Aorta (tissue), 5 donors: ENCODE measurements at regions of chr17 and their contacts with region 1.

Region 1: GRCh38 chr17:9177212-9177611 is 155.9 kb downstream of the NTN1 start:
- DNase-seq: peak in 1 of 2 donors; percentile 57
- ATAC-seq: peak; percentile 59
- H3K4me3 ChIP-seq: no peak overlapping the region
- H3K27ac ChIP-seq: no peak overlapping the region
- H3K4me1 ChIP-seq: no peaks in the 10 kb centered on the region
- H3K27me3 ChIP-seq: no peaks in the 10 kb centered on the region

Region 2: DNA sequence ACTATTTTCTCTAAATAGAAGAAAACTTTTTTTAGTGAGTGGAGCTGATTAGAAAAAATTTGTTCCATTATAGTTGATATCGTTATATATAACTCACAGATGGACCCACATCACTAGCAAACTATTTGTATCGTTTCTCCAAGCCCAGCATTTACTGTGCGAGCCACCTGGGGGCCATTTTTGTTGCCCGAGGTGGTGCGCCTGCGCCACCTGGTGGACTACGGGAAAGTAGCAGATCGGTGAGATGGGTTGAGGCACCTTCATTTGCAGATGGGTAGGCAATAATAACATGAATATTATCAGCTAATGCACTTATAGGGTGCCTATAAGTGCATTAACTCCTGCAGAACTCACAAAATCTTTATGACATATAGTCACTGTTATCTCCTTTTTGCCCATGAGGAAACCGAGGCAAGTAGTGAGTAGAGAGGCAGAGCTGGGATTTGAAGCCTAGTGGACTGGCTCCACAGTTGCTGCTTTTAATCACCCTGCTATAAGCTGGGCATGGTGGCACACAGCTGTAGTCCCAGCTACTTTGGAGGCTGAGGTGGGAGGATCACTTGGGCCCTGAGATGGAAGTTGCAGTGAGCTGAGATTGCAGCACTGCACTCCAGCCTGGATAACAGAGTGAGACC is 179.1 kb before region 1 on chr17:
- intact Hi-C with region 1: loop called in 1 of 2 experiments (anchors 5 kb)
- DNase-seq: peak; percentile 74 to 85
- ATAC-seq: no peak
- H3K4me3 ChIP-seq: no peak overlapping the region
- H3K27ac ChIP-seq: no peak overlapping the region
- H3K4me1 ChIP-seq: no peaks in the 10 kb centered on the region
- H3K27me3 ChIP-seq: no peaks in the 10 kb centered on the region

Region 3: DNA sequence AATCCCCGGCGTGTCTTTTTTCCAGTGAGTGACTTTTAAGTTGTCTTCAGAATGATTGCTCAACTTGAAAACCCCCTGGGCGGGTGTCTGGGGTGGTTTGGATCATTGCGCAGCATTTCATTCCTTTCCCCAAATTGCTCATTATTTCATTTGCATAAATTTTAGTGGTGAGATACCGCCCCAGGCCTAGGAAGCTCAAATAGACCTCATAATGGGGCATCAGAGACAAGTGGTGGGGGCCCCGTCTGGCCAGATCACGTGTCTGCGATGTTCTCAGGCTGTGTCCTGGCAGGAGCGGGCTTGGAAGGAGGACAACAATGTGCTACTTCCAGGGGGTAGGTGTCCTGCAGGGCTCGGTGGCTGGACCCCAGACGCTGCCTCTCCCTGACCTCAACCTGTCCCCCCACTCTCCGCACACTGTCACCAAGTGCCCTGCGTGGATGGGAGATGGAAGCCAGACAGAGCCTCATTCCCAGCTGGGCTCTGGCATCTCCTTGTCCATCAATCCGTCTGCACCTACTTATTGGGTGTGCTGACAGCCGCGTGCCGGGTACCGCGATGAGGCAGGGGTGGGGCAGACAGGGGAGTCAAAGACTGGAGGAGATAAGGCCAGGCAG is 39.0 kb before region 1 on chr17:
- intact Hi-C with region 1: no loop called
- DNase-seq: no peak
- ATAC-seq: no peak
- H3K4me3 ChIP-seq: no peak overlapping the region
- H3K27ac ChIP-seq: no peak overlapping the region
- H3K4me1 ChIP-seq: no peaks in the 10 kb centered on the region
- H3K27me3 ChIP-seq: no peaks in the 10 kb centered on the region

Region 4: DNA sequence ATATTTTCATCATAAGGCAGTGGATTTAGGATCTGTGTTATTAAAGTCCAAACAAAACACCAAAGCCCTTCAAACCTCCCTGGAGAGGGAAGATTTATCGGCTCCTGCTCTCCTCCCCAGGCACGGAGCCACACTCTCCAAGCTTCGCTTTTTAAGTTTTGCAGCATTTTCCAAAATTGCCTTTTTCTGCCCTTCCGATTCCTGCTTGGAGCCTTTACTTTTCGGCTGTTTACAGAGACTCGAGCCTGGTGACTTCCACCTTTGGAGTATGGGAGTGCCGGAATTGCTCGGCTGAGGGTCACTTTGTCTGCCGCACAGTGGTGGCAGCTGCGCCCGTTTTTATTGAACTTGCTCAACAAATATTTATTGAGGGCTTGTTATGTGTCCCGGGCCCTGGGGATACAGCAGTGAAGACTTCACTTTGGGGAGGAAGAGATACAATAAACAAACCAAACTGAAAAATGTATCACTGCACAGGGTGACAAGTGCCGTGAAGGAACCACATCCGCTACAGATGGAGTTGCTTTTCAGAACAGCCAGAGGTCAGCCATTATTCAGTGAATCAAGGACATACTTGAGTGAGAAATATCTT is 29.6 kb after region 1 on chr17:
- intact Hi-C with region 1: no loop called
- DNase-seq: peak in 1 of 2 donors; percentile 35
- ATAC-seq: peak; percentile 65
- H3K4me3 ChIP-seq: no peak overlapping the region
- H3K27ac ChIP-seq: no peak overlapping the region
- H3K4me1 ChIP-seq: no peaks in the 10 kb centered on the region
- H3K27me3 ChIP-seq: no peaks in the 10 kb centered on the region

Region 5: GRCh38 chr17:9313346-9313745 is 136.1 kb after region 1 on chr17:
- intact Hi-C with region 1: no loop called
- DNase-seq: no peak
- ATAC-seq: no peak
- H3K4me3 ChIP-seq: no peak overlapping the region
- H3K27ac ChIP-seq: no peak overlapping the region
- H3K4me1 ChIP-seq: no peaks in the 10 kb centered on the region
- H3K27me3 ChIP-seq: no peaks in the 10 kb centered on the region